PC-3 (cell line): ENCODE measurements at regions of chr2 and their contacts with region 1.

Region 1: GRCh38 chr2:184646177-184646576 is 47.8 kb downstream of the ZNF804A start:
- DNase-seq: peak; percentile 82
- ATAC-seq: peak; percentile 83
- H3K4me3 ChIP-seq: no peak overlapping the region
- H3K27ac ChIP-seq: no peak overlapping the region
- H3K4me1 ChIP-seq: peaks cover 17% of the 10 kb centered on the region
- H3K27me3 ChIP-seq: no peaks in the 10 kb centered on the region
- CTCF ChIP-seq: no peak

Region 2: DNA sequence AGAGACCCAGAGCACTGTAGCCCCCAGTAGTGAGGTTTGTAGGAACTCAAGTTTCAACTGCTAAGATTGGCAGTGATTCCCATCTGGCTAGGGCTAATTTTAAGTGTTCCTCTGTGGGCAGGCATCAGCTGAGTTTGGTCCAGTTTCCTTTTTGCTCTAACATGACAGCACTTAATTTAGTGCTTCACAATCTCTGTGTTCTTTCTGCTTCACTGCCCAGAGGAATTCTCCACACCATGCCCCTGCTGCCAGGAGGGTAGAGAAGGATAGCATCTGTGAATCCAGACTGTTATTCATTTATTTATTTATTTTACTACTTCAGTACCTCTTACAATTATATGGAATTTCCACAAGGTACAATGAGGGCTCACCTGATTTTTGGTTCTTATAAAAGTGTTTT is 542.5 kb after region 1 on chr2:
- CTCF ChIA-PET with region 1: no interaction called
- POLR2A ChIA-PET with region 1: no interaction called
- intact Hi-C with region 1: no loop called
- DNase-seq: no peak
- ATAC-seq: no peak
- H3K4me3 ChIP-seq: no peak overlapping the region
- H3K27ac ChIP-seq: no peak overlapping the region
- H3K4me1 ChIP-seq: no peaks in the 10 kb centered on the region
- H3K27me3 ChIP-seq: no peaks in the 10 kb centered on the region
- CTCF ChIP-seq: no peak

Region 3: GRCh38 chr2:185201063-185201462 is 554.9 kb after region 1 on chr2:
- CTCF ChIA-PET with region 1: no interaction called
- POLR2A ChIA-PET with region 1: no interaction called
- intact Hi-C with region 1: loop called (anchors 5 kb)
- DNase-seq: no peak
- ATAC-seq: no peak
- H3K4me3 ChIP-seq: no peak overlapping the region
- H3K27ac ChIP-seq: no peak overlapping the region
- H3K4me1 ChIP-seq: no peaks in the 10 kb centered on the region
- H3K27me3 ChIP-seq: no peaks in the 10 kb centered on the region
- CTCF ChIP-seq: no peak

Region 4: GRCh38 chr2:185279999-185280398 is 633.8 kb after region 1 on chr2:
- CTCF ChIA-PET with region 1: no interaction called
- POLR2A ChIA-PET with region 1: no interaction called
- intact Hi-C with region 1: loop called (anchors 1 kb)
- DNase-seq: peak; percentile 57
- ATAC-seq: no peak
- H3K4me3 ChIP-seq: no peak overlapping the region
- H3K27ac ChIP-seq: no peak overlapping the region
- H3K4me1 ChIP-seq: 0 out of 2 replicates have a peak, but pooled peaks cover 4% of the 10 kb centered on the region
- H3K27me3 ChIP-seq: no peaks in the 10 kb centered on the region
- CTCF ChIP-seq: peak; percentile 78

Region 5: DNA sequence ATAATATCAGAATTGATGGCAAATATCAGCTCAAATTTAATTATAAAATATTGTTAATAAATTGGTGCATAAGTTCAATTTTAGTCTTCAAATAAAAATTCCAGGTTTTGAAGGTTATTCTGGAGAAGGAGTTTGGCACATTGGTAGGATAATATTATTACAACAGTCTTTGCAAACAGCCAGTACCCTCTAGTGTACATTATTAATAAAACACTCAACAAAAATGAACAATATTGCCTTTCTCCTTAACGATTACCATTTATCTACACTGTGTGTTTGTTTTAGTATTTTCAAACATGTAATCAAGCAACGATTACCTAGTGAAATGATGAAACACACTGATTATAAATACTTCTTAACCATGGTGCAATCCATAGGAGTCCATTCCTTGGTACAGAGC is 758.4 kb after region 1 on chr2:
- CTCF ChIA-PET with region 1: no interaction called
- POLR2A ChIA-PET with region 1: no interaction called
- intact Hi-C with region 1: loop called (anchors 10 kb)
- DNase-seq: no peak
- ATAC-seq: 0 out of 2 replicates have a peak, but pooled peaks have one; percentile 31
- H3K4me3 ChIP-seq: no peak overlapping the region
- H3K27ac ChIP-seq: no peak overlapping the region
- H3K4me1 ChIP-seq: no peaks in the 10 kb centered on the region
- H3K27me3 ChIP-seq: no peaks in the 10 kb centered on the region
- CTCF ChIP-seq: peak; percentile 44